GM12878 (cell line): ENCODE measurements at regions of chr7 and their contacts with region 1.

Region 1: GRCh38 chr7:129224251-129225205 is at the start of gene AHCYL2:
- DNase-seq: peak; percentile 89
- ATAC-seq: peak; percentile 97
- H3K4me3 ChIP-seq: peak within 1 kb of the TSS; percentile 72
- H3K27ac ChIP-seq: peak within 1 kb of the TSS; percentile 71
- H3K4me1 ChIP-seq: peaks cover 8% of the 10 kb centered on the region; the same call in 1 of the 2 replicates
- H3K27me3 ChIP-seq: no peaks in the 10 kb centered on the region
- CTCF ChIP-seq: no peak
- EP300 ChIP-seq: no peak
- POLR2A ChIP-seq: peak; percentile 90
- RAD21 ChIP-seq: no peak
- polyA plus RNA-seq, gene AHCYL2: 1.7 to 2.0 TPM

Region 2: DNA sequence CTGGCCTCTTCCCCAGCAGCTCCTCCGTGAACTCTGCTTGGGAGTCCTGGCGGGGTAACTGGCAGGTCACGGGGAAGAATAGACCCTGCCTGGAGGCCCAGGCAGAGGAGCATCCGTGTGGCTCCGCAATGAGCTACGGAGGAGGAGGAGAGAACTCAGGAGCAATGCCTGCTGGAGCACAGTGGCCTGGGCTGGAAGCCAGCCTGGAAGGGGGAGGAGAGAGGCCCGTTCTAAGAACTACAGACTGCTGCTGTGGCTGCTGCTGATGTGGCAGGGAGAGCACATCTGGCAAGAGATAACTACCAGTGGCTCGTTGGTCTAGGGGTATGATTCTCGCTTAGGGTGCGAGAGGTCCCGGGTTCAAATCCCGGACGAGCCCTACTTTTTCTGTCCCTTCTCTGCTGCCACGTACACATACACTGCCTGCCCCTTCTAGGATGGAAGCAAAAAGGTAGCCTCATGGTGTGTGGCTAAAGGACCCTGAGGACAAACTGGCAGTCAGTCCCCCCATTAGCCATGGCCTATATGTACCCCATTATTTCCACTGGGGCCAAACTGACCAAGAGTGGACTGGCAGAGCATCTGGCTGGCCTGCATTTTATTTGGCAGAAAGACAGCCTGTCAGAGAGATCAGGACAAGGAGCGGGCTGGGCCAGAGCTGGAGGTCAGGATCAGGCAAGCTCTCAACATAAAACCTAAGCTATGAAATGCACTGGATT is 441.2 kb before region 1 on chr7:
- CTCF ChIA-PET with region 1: no interaction called
- POLR2A ChIA-PET with region 1: no interaction called
- RAD21 ChIA-PET with region 1: no interaction called
- SMC1A ChIA-PET with region 1: no interaction called
- in situ Hi-C with region 1: no loop called
- intact Hi-C with region 1: no loop called
- DNase-seq: no peak
- ATAC-seq: peak; percentile 82
- H3K4me3 ChIP-seq: no peak overlapping the region
- H3K27ac ChIP-seq: no peak overlapping the region
- H3K4me1 ChIP-seq: no peaks in the 10 kb centered on the region
- H3K27me3 ChIP-seq: no peaks in the 10 kb centered on the region; a peak in 1 of 4 replicates
- CTCF ChIP-seq: no peak
- EP300 ChIP-seq: no peak
- POLR2A ChIP-seq: no peak
- RAD21 ChIP-seq: no peak

Region 3: DNA sequence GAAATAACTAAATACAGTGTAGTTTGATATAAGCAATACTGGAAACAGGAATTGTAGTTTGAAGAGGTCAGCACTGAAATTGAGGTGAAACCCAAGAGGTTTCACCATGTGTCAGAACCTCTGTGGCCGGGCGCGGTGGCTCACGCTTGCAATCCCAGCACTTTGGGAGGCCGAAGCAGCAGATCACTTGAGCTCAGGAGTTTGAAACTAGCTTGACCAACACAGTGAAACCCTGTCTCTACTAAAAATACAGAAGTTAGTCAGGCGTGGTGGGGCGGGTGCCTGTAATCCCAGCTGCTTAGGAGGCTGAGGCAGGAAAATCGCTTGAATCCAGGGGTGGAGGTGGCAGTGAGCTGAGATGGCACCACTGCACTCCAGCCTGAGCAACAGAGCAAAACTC is 14.0 kb after region 1 on chr7:
- CTCF ChIA-PET with region 1: interaction called, 55 read pairs
- POLR2A ChIA-PET with region 1: interaction called, 3 read pairs
- RAD21 ChIA-PET with region 1: interaction called, 4 read pairs
- SMC1A ChIA-PET with region 1: interaction called, 17 read pairs
- in situ Hi-C with region 1: no loop called
- intact Hi-C with region 1: no loop called
- DNase-seq: no peak
- ATAC-seq: peak; percentile 77
- H3K4me3 ChIP-seq: peak overlapping the region; percentile 42
- H3K27ac ChIP-seq: no peak overlapping the region
- H3K4me1 ChIP-seq: peaks cover 13% of the 10 kb centered on the region
- H3K27me3 ChIP-seq: no peaks in the 10 kb centered on the region
- CTCF ChIP-seq: no peak
- EP300 ChIP-seq: no peak
- POLR2A ChIP-seq: no peak
- RAD21 ChIP-seq: no peak